ENCODE measurements at regions of chr9 and their contacts with region 1.

Region 1: DNA sequence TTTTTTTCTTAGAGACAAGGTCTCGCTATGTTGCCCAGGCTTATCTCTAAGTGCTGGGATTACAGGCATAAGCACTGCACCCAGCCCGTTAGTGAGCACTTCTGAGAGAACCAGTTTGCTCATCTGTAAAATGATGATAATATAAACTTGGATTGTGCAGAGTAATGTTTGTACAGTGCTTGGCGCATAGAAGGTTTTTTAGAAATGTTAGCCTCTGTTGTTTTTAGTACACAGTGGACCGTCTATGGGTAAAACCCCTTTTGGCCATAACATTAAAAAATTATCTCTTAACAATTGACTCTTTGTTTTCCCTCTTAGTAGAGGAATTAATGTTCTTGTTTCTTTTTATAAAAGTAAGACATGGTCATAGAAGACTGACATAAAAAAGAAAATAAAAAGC is 202.1 kb downstream of the PCSK5 start:
- DNase-seq: no peak
- ATAC-seq: no peak
- H3K4me3 ChIP-seq: no peak overlapping the region
- H3K27ac ChIP-seq: no peak overlapping the region
- H3K4me1 ChIP-seq: peaks cover 0 to 13% of the 10 kb centered on the region in 2 donors
- H3K27me3 ChIP-seq: no peaks in the 10 kb centered on the region
- CTCF ChIP-seq: no peak
- POLR2A ChIP-seq: no peak

Region 2: DNA sequence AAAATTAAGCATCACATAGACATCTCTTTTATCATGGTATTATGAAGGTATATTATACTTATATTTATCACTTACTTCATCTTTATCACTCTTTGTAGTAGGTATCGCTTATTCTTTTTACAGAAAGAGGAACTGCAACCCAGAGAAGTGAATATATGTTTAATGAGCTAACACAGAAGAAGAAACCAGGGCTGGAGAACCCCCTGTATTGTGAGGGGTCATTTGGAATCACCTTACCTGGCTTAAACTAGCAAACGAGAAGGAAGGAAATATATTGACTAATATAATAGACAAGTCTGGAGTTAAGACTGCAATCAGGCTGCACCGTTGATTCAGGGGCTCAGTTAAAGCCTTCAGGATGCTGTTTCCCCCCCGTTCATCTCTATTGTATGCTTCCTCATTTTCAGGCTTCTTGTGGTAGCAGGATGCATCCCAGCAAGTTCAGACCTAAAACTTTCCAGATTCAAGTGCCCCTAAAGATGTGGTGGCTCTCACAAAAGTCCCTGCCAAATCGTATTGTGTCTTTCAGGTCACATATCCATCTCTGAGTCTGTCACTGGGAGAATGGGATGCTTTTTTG is 512.8 kb after region 1 on chr9:
- in situ Hi-C with region 1: no loop called
- intact Hi-C with region 1: loop called (anchors 5 kb)
- DNase-seq: no peak
- ATAC-seq: no peak
- H3K4me3 ChIP-seq: no peak overlapping the region
- H3K27ac ChIP-seq: no peak overlapping the region
- H3K4me1 ChIP-seq: no peaks in the 10 kb centered on the region
- H3K27me3 ChIP-seq: no peaks in the 10 kb centered on the region
- CTCF ChIP-seq: no peak
- POLR2A ChIP-seq: no peak

Measured in gastrocnemius medialis (tissue), 4 donors.